ENCODE measurements at regions of chr17 and their contacts with region 1.

Region 1: GRCh38 chr17:19362277-19363113 is at the start of gene B9D1:
- DNase-seq: peak; percentile 90 to 97 (median 93)
- H3K4me3 ChIP-seq: peak within 1 kb of the TSS; percentile 89
- H3K4me3 Mint-ChIP-seq: peak within 1 kb of the TSS; percentile 89 to 96 (median 93)
- H3K27ac ChIP-seq: peak within 1 kb of the TSS; percentile 73
- H3K27ac Mint-ChIP-seq: peak within 1 kb of the TSS; percentile 80 to 95 (median 91)
- H3K4me1 ChIP-seq: peaks cover 7% of the 10 kb centered on the region
- H3K4me1 Mint-ChIP-seq: peaks cover 10 to 16% (median 11%) of the 10 kb centered on the region in 3 donors
- H3K27me3 ChIP-seq: no peaks in the 10 kb centered on the region
- H3K27me3 Mint-ChIP-seq: peaks cover 5 to 8% of the 10 kb centered on the region in 2 donors
- total RNA-seq, gene B9D1: 4.8 to 6.8 TPM

Region 2: GRCh38 chr17:19377602-19378392 is 15.3 kb after region 1 on chr17:
- CTCF ChIA-PET with region 1: interaction called, 118 read pairs
- POLR2A ChIA-PET with region 1: interaction called, 18 read pairs
- DNase-seq: peak; percentile 89 to 96 (median 93)
- H3K4me3 ChIP-seq: peak overlapping the region; percentile 100
- H3K4me3 Mint-ChIP-seq: peak overlapping the region; percentile 94 to 100 (median 97)
- H3K27ac ChIP-seq: peak overlapping the region; percentile 95
- H3K27ac Mint-ChIP-seq: peak overlapping the region; percentile 92 to 98 (median 96)
- H3K4me1 ChIP-seq: peaks cover 11% of the 10 kb centered on the region
- H3K4me1 Mint-ChIP-seq: peaks cover 25 to 31% (median 26%) of the 10 kb centered on the region in 3 donors
- H3K27me3 ChIP-seq: no peaks in the 10 kb centered on the region
- H3K27me3 Mint-ChIP-seq: no peaks in the 10 kb centered on the region

Region 3: DNA sequence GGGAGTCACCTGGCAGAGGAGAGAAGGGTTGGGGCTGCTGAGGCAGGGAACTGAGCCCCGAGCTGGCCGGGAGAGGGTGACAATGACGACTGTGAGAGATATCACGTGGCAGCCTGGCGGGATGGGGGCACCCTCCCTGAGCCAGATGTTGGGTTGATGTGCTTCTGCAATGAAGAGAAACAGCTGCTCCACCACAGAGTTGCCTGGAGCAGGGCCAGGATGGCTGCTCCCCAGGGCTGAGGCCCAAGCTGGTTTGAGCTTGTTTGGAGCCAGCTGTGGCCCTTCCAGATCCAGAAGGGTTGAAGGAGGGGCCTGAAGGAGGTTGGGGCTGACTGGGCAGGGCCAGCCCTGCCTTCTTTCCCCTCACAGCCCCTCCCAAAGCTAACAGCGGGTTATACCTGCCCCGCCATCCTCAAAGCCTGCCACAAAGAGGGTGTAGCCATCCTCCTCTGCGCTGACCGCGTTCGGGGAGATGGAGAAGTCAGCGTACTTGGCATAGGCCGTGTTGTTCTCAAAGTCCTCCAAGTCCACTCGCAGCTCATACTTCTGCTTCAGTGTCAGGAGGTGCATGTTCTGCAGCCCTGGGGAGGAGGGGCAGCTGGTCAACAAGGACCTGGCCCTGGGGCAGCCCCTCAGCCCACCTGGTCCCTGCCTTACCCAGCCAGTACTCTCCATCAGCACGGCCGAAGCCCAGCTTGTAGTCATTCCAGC is 22.4 kb after region 1 on chr17:
- CTCF ChIA-PET with region 1: interaction called, 118 read pairs
- POLR2A ChIA-PET with region 1: no interaction called
- DNase-seq: peak in 1 of 5 donors; percentile 42
- H3K4me3 ChIP-seq: no peak overlapping the region
- H3K4me3 Mint-ChIP-seq: no peak overlapping the region
- H3K27ac ChIP-seq: no peak overlapping the region
- H3K27ac Mint-ChIP-seq: peak overlapping the region in 3 of 8 donors; percentile 28 to 74 (median 70)
- H3K4me1 ChIP-seq: no peaks in the 10 kb centered on the region
- H3K4me1 Mint-ChIP-seq: peaks cover 0 to 5% (median 4%) of the 10 kb centered on the region in 3 donors
- H3K27me3 ChIP-seq: no peaks in the 10 kb centered on the region
- H3K27me3 Mint-ChIP-seq: no peaks in the 10 kb centered on the region

Region 4: GRCh38 chr17:19447085-19447583 is 84.6 kb after region 1 on chr17:
- CTCF ChIA-PET with region 1: interaction called, 152 read pairs
- POLR2A ChIA-PET with region 1: interaction called, 4 read pairs
- DNase-seq: peak; percentile 57 to 72 (median 65)
- H3K4me3 ChIP-seq: no peak overlapping the region
- H3K4me3 Mint-ChIP-seq: no peak overlapping the region
- H3K27ac ChIP-seq: no peak overlapping the region
- H3K27ac Mint-ChIP-seq: peak overlapping the region in 1 of 8 donors; percentile 19
- H3K4me1 ChIP-seq: no peaks in the 10 kb centered on the region
- H3K4me1 Mint-ChIP-seq: peaks cover 0 to 5% (median 3%) of the 10 kb centered on the region in 3 donors
- H3K27me3 ChIP-seq: no peaks in the 10 kb centered on the region
- H3K27me3 Mint-ChIP-seq: peaks cover 16 to 27% of the 10 kb centered on the region in 2 donors

Region 5: DNA sequence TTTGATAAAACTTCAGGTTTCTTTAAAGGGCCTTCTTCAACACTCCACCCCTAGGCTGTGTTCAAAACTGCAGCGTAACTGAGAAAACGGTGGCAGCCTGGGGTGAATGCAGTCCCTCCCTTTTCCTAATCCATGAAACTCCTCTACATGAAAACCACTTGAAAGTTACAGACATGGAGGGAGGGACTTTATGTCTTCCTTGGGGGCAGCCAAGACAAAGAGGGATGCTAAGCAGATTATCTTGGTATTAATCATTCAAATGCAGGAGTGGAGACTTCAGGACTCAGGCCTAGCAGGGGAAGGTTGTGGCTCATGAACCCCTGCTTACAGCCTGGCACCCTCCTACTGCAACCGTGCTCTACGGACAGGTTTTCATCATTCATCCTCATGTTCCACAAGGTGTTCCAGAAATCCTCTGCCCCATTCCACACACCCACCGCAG is 95.4 kb after region 1 on chr17:
- CTCF ChIA-PET with region 1: interaction called, 21 read pairs
- POLR2A ChIA-PET with region 1: no interaction called
- DNase-seq: no peak
- H3K4me3 ChIP-seq: no peak overlapping the region
- H3K4me3 Mint-ChIP-seq: no peak overlapping the region
- H3K27ac ChIP-seq: no peak overlapping the region
- H3K27ac Mint-ChIP-seq: peak overlapping the region in 1 of 8 donors; percentile 2
- H3K4me1 ChIP-seq: peaks cover 22% of the 10 kb centered on the region
- H3K4me1 Mint-ChIP-seq: peaks cover 19 to 34% (median 21%) of the 10 kb centered on the region in 3 donors
- H3K27me3 ChIP-seq: no peaks in the 10 kb centered on the region
- H3K27me3 Mint-ChIP-seq: peaks cover under 1 to 2% of the 10 kb centered on the region in 2 donors

Region 6: GRCh38 chr17:19464031-19465026 is 101.8 kb after region 1 on chr17:
- CTCF ChIA-PET with region 1: interaction called, 16 read pairs
- POLR2A ChIA-PET with region 1: no interaction called
- DNase-seq: no peak
- H3K4me3 ChIP-seq: no peak overlapping the region
- H3K4me3 Mint-ChIP-seq: peak overlapping the region in 1 of 7 donors; percentile 65
- H3K27ac ChIP-seq: no peak overlapping the region
- H3K27ac Mint-ChIP-seq: peak overlapping the region in 7 of 8 donors; percentile 12 to 90 (median 83)
- H3K4me1 ChIP-seq: peaks cover 39% of the 10 kb centered on the region
- H3K4me1 Mint-ChIP-seq: peaks cover 28 to 43% (median 29%) of the 10 kb centered on the region in 3 donors
- H3K27me3 ChIP-seq: no peaks in the 10 kb centered on the region
- H3K27me3 Mint-ChIP-seq: no peaks in the 10 kb centered on the region

Region 7: GRCh38 chr17:19766422-19767270 is 404.2 kb after region 1 on chr17:
- CTCF ChIA-PET with region 1: interaction called, 11 read pairs
- POLR2A ChIA-PET with region 1: no interaction called
- DNase-seq: peak; percentile 57 to 77 (median 68)
- H3K4me3 ChIP-seq: no peak overlapping the region
- H3K4me3 Mint-ChIP-seq: no peak overlapping the region
- H3K27ac ChIP-seq: no peak overlapping the region
- H3K27ac Mint-ChIP-seq: peak overlapping the region in 1 of 8 donors; percentile 74
- H3K4me1 ChIP-seq: peaks cover 52% of the 10 kb centered on the region
- H3K4me1 Mint-ChIP-seq: peaks cover 12 to 18% (median 15%) of the 10 kb centered on the region in 3 donors
- H3K27me3 ChIP-seq: no peaks in the 10 kb centered on the region
- H3K27me3 Mint-ChIP-seq: peaks cover 5 to 16% of the 10 kb centered on the region in 2 donors